CD8-positive, alpha-beta T cell (primary cell): ENCODE measurements at regions of chr6 and their contacts with region 1.

Region 1: DNA sequence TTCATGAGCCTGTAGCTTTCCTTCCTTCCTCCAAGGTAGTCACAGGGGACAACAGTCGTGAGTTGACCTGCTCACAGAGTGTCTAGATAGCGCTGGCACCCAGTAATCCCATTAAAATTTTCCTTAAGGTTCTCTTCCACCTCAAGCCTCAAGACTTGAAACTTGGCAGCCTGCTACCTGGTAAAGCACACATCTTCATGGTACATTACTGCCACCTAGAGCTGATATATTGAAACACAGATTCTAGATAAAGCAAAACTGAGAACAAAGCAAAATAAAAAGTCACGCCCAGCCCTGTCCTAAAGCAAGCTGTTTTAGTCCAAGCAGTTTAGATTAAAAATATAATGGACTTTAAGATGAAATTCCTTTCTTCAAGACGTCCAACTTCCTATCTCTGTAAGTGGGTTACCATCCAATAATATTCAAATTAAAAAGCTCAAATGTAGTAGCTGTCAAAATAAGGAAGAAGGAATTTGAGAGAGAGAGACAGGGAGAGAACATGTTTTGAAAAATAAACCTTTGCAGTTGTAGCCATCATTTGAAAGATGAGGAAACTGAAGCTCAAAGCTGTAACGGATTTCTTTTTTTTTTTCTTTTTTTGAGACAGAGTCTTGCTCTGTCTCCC is 50.7 kb upstream of the CD83 start:
- DNase-seq: peak in 3 of 9 experiments; percentile 8 to 74 (median 64)
- ATAC-seq: peak; percentile 78
- H3K4me3 ChIP-seq: no peak overlapping the region
- H3K4me3 Mint-ChIP-seq: no peak overlapping the region
- H3K27ac ChIP-seq: no peak overlapping the region
- H3K27ac Mint-ChIP-seq: no peak overlapping the region
- H3K4me1 ChIP-seq: no peaks in the 10 kb centered on the region
- H3K4me1 Mint-ChIP-seq: no peaks in the 10 kb centered on the region
- H3K27me3 ChIP-seq: peaks cover 0 to 3% of the 10 kb centered on the region in 2 experiments
- H3K27me3 Mint-ChIP-seq: peaks cover 10% of the 10 kb centered on the region
- CTCF ChIP-seq: peak; percentile 60

Region 2: GRCh38 chr6:12911387-12911960 is 1155.4 kb before region 1 on chr6:
- CTCF ChIA-PET with region 1: no interaction called
- POLR2A ChIA-PET with region 1: no interaction called
- intact Hi-C with region 1: loop called in 1 of 2 experiments (anchors 10 kb)
- DNase-seq: peak in 2 of 9 experiments; percentile 11 to 38
- ATAC-seq: no peak
- H3K4me3 ChIP-seq: no peak overlapping the region
- H3K4me3 Mint-ChIP-seq: no peak overlapping the region
- H3K27ac ChIP-seq: no peak overlapping the region
- H3K27ac Mint-ChIP-seq: no peak overlapping the region
- H3K4me1 ChIP-seq: no peaks in the 10 kb centered on the region
- H3K4me1 Mint-ChIP-seq: no peaks in the 10 kb centered on the region
- H3K27me3 ChIP-seq: no peaks in the 10 kb centered on the region
- H3K27me3 Mint-ChIP-seq: peaks cover 4% of the 10 kb centered on the region
- CTCF ChIP-seq: no peak

Region 3: DNA sequence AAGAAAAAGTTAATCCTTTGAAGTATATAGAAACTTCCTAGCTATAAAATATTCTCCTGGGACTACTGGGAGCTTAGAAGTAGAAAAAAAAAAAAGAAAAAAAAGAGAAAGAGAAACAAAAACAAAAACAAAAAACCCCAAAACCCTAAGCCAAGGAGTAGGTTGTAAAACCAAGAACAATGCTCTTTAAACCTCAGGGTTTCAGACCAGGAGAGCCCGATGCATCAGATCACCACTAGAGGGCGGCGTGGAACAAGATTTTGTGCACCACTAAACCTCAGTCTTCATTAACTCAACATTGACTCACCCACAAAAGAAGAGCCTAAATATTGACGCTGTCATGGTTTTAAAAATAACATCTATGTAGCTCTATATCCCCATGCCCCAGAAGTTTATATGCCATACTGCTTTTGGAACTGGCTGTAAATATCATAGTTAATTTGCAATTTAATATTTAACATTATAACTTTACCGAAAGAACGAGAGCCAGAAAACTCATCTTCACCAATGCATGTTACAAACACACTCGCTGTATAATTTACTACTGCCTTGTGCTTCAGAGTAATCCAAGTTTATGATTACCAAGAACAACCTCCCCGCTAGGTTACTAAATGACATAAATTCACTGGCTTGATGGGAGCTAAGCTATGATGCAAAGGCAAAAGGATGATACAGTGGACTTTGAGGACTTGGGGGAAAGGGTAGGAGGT is 271.7 kb before region 1 on chr6:
- CTCF ChIA-PET with region 1: interaction called, 40 read pairs
- POLR2A ChIA-PET with region 1: no interaction called
- intact Hi-C with region 1: loop called (anchors 1 kb)
- DNase-seq: peak; percentile 64 to 88 (median 81)
- ATAC-seq: peak; percentile 99
- H3K4me3 ChIP-seq: no peak overlapping the region
- H3K4me3 Mint-ChIP-seq: no peak overlapping the region
- H3K27ac ChIP-seq: no peak overlapping the region
- H3K27ac Mint-ChIP-seq: no peak overlapping the region
- H3K4me1 ChIP-seq: no peaks in the 10 kb centered on the region
- H3K4me1 Mint-ChIP-seq: peaks cover 6% of the 10 kb centered on the region
- H3K27me3 ChIP-seq: no peaks in the 10 kb centered on the region
- H3K27me3 Mint-ChIP-seq: no peaks in the 10 kb centered on the region
- CTCF ChIP-seq: peak; percentile 95

Region 4: GRCh38 chr6:13908955-13909381 is 157.9 kb before region 1 on chr6:
- CTCF ChIA-PET with region 1: interaction called, 13 read pairs
- POLR2A ChIA-PET with region 1: no interaction called
- intact Hi-C with region 1: loop called (anchors 1 to 2 kb)
- DNase-seq: peak in 7 of 9 experiments; percentile 6 to 75 (median 32)
- ATAC-seq: peak; percentile 62
- H3K4me3 ChIP-seq: no peak overlapping the region
- H3K4me3 Mint-ChIP-seq: no peak overlapping the region
- H3K27ac ChIP-seq: no peak overlapping the region
- H3K27ac Mint-ChIP-seq: no peak overlapping the region
- H3K4me1 ChIP-seq: no peaks in the 10 kb centered on the region
- H3K4me1 Mint-ChIP-seq: no peaks in the 10 kb centered on the region
- H3K27me3 ChIP-seq: no peaks in the 10 kb centered on the region
- H3K27me3 Mint-ChIP-seq: peaks cover 24% of the 10 kb centered on the region
- CTCF ChIP-seq: peak; percentile 45

Region 5: GRCh38 chr6:14001329-14002012 is 65.4 kb before region 1 on chr6:
- CTCF ChIA-PET with region 1: no interaction called
- POLR2A ChIA-PET with region 1: no interaction called
- intact Hi-C with region 1: no loop called
- DNase-seq: no peak
- ATAC-seq: no peak
- H3K4me3 ChIP-seq: no peak overlapping the region
- H3K4me3 Mint-ChIP-seq: no peak overlapping the region
- H3K27ac ChIP-seq: no peak overlapping the region
- H3K27ac Mint-ChIP-seq: no peak overlapping the region
- H3K4me1 ChIP-seq: no peaks in the 10 kb centered on the region
- H3K4me1 Mint-ChIP-seq: no peaks in the 10 kb centered on the region
- H3K27me3 ChIP-seq: no peaks in the 10 kb centered on the region
- H3K27me3 Mint-ChIP-seq: peaks cover 13% of the 10 kb centered on the region
- CTCF ChIP-seq: no peak

Region 6: GRCh38 chr6:14144678-14145113 is 77.8 kb after region 1 on chr6:
- CTCF ChIA-PET with region 1: interaction called, 9 read pairs
- POLR2A ChIA-PET with region 1: no interaction called
- intact Hi-C with region 1: loop called in 1 of 2 experiments (anchors 5 kb)
- DNase-seq: peak; percentile 43 to 81 (median 75)
- ATAC-seq: peak; percentile 95
- H3K4me3 ChIP-seq: no peak overlapping the region
- H3K4me3 Mint-ChIP-seq: no peak overlapping the region
- H3K27ac ChIP-seq: no peak overlapping the region
- H3K27ac Mint-ChIP-seq: no peak overlapping the region
- H3K4me1 ChIP-seq: peaks cover 4% of the 10 kb centered on the region
- H3K4me1 Mint-ChIP-seq: no peaks in the 10 kb centered on the region
- H3K27me3 ChIP-seq: no peaks in the 10 kb centered on the region
- H3K27me3 Mint-ChIP-seq: no peaks in the 10 kb centered on the region
- CTCF ChIP-seq: peak; percentile 95